ENCODE measurements at regions of chr9 and their contacts with region 1.

Region 1: GRCh38 chr9:93962561-93963440 is 7.6 kb upstream of the BARX1 start:
- DNase-seq: peak; percentile 85
- ATAC-seq: peak; percentile 56
- H3K4me3 ChIP-seq: no peak overlapping the region
- H3K4me3 Mint-ChIP-seq: no peak overlapping the region
- H3K27ac ChIP-seq: no peak overlapping the region
- H3K27ac Mint-ChIP-seq: no peak overlapping the region
- H3K4me1 ChIP-seq: peaks cover 40% of the 10 kb centered on the region in 2 donors
- H3K4me1 Mint-ChIP-seq: peaks cover 32% of the 10 kb centered on the region
- H3K27me3 ChIP-seq: peaks cover 0 to 72% (median 42%) of the 10 kb centered on the region in 4 experiments
- H3K27me3 Mint-ChIP-seq: peaks cover 54% of the 10 kb centered on the region
- CTCF ChIP-seq: peak; percentile 79

Region 2: GRCh38 chr9:92963831-92964626 is 998.8 kb before region 1 on chr9:
- CTCF ChIA-PET with region 1: no interaction called
- POLR2A ChIA-PET with region 1: no interaction called
- intact Hi-C with region 1: loop called (anchors 5 kb)
- DNase-seq: peak; percentile 88
- ATAC-seq: peak; percentile 80
- H3K4me3 ChIP-seq: peak overlapping the region; percentile 75 to 92 (median 86)
- H3K4me3 Mint-ChIP-seq: peak overlapping the region; percentile 96
- H3K27ac ChIP-seq: peak overlapping the region; percentile 78 to 83
- H3K27ac Mint-ChIP-seq: peak overlapping the region; percentile 98
- H3K4me1 ChIP-seq: peaks cover 58 to 74% of the 10 kb centered on the region in 2 donors
- H3K4me1 Mint-ChIP-seq: peaks cover 75% of the 10 kb centered on the region
- H3K27me3 ChIP-seq: no peaks in the 10 kb centered on the region
- H3K27me3 Mint-ChIP-seq: no peaks in the 10 kb centered on the region
- CTCF ChIP-seq: no peak

Region 3: DNA sequence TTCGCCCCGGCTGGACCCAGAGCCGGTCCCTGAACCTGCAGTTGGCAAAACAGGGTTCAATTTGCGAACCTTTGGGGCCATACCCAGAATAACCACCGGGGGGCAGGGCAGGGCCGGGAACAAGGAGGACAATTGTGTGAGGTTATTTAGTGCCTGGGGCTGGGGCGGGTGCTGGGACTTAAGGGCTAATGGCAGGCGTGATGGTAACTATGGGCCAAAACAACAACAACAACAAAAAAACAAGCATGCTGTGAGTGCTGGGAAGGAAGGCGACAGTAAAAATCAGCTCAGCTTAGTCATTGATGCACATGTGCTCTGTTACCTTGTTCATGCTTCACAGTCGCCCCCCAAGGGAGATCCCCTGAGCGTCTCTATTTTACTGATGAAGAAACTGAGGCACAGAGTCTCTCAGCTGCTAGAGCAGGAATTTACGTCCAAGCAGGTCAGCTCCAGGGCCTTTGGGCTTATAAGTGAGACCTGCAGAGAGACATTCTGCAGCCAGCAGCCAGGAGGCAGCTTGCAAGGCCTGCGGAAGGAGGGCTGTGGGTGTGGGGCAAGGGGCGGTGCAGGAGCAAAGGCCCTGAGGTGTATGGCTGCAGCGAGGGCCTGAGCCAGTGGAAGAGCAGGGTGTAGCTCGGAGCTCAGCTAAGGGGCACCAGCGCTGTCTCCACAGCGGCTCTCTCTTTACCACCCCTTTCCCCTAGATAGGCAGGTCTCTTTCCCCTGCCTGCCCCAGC is 280.4 kb before region 1 on chr9:
- CTCF ChIA-PET with region 1: interaction called, 60 read pairs
- POLR2A ChIA-PET with region 1: no interaction called
- intact Hi-C with region 1: no loop called
- DNase-seq: peak; percentile 59
- ATAC-seq: peak; percentile 41
- H3K4me3 ChIP-seq: no peak overlapping the region
- H3K4me3 Mint-ChIP-seq: no peak overlapping the region
- H3K27ac ChIP-seq: no peak overlapping the region
- H3K27ac Mint-ChIP-seq: no peak overlapping the region
- H3K4me1 ChIP-seq: no peaks in the 10 kb centered on the region
- H3K4me1 Mint-ChIP-seq: no peaks in the 10 kb centered on the region
- H3K27me3 ChIP-seq: peaks cover 0 to 8% (median 0%) of the 10 kb centered on the region in 4 experiments
- H3K27me3 Mint-ChIP-seq: peaks cover 16% of the 10 kb centered on the region
- CTCF ChIP-seq: peak; percentile 80

Region 4: DNA sequence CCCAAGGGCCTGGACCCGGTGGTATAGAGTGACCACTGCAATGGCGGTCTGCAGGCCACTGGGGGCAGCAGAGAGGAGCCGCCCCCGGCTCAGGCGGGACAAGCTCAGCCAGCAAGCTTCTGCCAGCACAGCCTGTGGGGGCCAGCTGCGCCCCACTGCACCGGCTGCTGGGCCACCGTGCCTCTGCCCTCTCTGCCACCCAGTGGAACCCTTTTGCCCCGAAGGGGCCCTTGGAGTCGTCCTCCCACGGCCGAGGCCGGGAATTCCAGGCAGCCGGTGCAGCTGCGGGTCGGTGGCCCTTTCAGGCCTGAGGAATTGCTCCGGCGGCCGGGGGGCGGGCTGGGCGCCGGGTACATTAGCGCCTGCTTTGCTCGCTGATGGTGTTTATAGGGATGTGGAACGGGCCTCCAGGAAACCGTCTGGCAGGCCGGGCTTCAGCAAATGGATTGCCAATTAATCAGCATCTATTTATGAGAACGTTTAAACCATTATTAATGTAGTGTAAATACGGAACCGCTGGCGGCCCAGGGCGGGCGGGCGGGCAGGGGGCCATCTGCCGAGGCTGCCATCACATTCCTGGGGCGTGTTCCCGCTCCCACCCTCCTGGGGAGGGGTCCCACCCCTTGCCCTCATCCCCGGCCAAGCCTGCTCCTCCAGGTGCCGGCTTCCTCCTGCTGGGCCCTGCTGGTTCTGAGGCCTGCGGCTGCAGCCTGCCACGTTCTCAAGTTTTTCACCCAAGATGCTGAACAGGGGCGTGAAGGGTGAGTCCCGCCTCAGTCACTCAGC is 135.1 kb before region 1 on chr9:
- CTCF ChIA-PET with region 1: interaction called, 4 read pairs
- POLR2A ChIA-PET with region 1: no interaction called
- intact Hi-C with region 1: loop called (anchors 2 kb)
- DNase-seq: peak; percentile 30
- ATAC-seq: no peak
- H3K4me3 ChIP-seq: no peak overlapping the region
- H3K4me3 Mint-ChIP-seq: no peak overlapping the region
- H3K27ac ChIP-seq: no peak overlapping the region
- H3K27ac Mint-ChIP-seq: no peak overlapping the region
- H3K4me1 ChIP-seq: peaks cover 0 to 12% of the 10 kb centered on the region in 2 donors
- H3K4me1 Mint-ChIP-seq: peaks cover 12% of the 10 kb centered on the region
- H3K27me3 ChIP-seq: peaks cover 0 to 31% (median 6%) of the 10 kb centered on the region in 4 experiments
- H3K27me3 Mint-ChIP-seq: peaks cover 47% of the 10 kb centered on the region
- CTCF ChIP-seq: peak; percentile 66

Region 5: DNA sequence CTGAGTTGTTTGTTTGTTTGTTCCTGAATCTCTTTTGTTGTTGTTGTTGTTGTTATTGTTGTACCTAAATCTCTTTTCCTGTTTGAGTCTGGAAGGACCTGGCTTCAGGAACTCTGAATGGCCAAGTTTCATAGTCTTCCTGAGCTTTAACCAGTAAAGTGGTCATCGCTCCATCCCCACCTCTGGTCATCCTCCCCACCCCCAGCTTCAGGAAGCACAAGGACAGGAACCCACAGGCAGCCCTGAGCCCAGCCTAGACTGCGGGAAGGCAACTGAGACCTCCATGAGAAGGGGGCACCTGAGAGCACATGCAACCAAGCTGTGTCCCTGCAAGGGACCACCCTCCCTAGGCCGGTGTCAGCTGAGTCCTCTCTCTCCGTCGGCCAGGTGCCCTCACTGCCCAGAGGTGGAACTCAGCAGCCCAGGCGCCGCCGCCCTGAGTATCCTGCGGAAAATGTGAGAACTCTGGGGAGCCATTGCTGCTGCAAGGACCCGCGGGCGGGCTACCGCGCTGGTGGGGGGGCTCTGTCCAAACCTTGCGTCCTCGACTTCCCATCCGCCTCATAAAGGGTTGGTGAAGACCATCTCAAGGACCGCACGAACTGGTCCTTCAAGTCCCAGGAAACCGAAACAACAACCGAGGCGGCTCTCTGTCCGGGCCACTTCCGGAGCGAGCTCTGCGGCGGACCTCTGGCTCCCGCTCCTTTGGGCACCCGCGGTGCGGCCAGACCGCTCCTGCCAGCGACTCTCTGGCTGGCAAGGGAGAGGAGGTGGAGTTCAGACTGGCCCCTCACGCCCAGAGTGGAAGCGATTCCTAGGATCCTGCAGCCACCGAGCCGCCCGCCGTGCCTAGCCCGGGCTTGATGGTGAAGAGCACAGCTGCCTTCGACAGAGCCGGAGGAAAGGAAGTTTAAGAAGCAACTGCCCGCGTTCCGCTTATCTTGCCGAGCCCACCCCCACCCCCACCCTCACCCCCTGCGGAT is 11.9 kb before region 1 on chr9:
- CTCF ChIA-PET with region 1: interaction called, 14 read pairs
- POLR2A ChIA-PET with region 1: no interaction called
- intact Hi-C with region 1: no loop called
- DNase-seq: peak; percentile 50
- ATAC-seq: no peak
- H3K4me3 ChIP-seq: peak overlapping the region; percentile 11 to 61 (median 45)
- H3K4me3 Mint-ChIP-seq: peak overlapping the region; percentile 76
- H3K27ac ChIP-seq: no peak overlapping the region
- H3K27ac Mint-ChIP-seq: no peak overlapping the region
- H3K4me1 ChIP-seq: peaks cover 62 to 76% of the 10 kb centered on the region in 2 donors
- H3K4me1 Mint-ChIP-seq: peaks cover 54% of the 10 kb centered on the region
- H3K27me3 ChIP-seq: peaks cover 0 to 92% (median 75%) of the 10 kb centered on the region in 4 experiments
- H3K27me3 Mint-ChIP-seq: peaks cover 65% of the 10 kb centered on the region
- CTCF ChIP-seq: no peak

Region 6: DNA sequence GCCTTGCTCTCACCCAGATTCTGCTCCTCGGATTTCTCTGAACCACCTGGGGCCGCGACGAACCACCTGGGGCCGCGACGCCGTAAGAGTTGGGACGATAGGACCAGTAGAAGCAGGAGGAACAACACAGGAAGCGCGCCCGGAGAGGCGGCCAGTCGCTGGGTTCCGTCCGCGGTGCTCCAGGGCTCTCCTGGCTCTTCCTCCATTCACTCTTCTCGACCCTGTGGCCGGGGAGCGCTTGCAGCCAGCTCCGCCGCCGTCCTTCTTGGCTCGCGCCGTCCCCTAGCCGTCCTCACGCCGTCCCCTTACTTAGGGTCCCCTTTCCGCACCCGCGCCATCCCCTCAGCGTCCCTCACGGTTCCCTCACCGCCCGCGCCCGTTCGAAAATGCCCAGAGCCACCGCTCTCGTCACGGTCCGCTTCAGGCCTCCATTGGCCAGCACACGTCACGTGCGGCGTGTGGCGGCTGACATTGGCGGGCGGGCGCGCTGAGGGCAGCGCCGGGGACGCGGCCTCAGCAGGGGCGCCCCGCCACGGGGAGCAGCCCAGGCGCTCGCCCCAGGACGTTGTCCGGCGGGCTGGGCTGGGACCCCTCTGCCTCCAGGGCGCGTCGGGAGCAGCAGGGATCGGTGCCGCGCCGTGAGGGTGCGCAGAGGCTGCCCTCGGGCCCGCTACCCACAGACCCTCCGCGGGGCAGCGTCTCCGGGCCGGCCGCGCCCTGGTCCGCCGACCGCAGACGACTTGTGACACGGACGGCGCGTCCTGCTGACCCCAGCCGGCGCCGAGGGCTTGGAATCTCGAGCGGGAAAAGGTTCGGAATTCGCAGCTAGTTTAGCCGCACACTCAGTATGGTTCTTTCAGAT is 67.7 kb after region 1 on chr9:
- CTCF ChIA-PET with region 1: no interaction called
- POLR2A ChIA-PET with region 1: no interaction called
- intact Hi-C with region 1: loop called (anchors 2 kb)
- DNase-seq: peak; percentile 85
- ATAC-seq: peak; percentile 99
- H3K4me3 ChIP-seq: peak overlapping the region; percentile 58 to 90 (median 77)
- H3K4me3 Mint-ChIP-seq: peak overlapping the region; percentile 100
- H3K27ac ChIP-seq: peak overlapping the region; percentile 36 to 79
- H3K27ac Mint-ChIP-seq: peak overlapping the region; percentile 97
- H3K4me1 ChIP-seq: peaks cover 12 to 13% of the 10 kb centered on the region in 2 donors
- H3K4me1 Mint-ChIP-seq: peaks cover 15% of the 10 kb centered on the region
- H3K27me3 ChIP-seq: peaks cover 0 to 6% (median 0%) of the 10 kb centered on the region in 4 experiments
- H3K27me3 Mint-ChIP-seq: peaks cover 5% of the 10 kb centered on the region
- CTCF ChIP-seq: no peak

Measured in B cell (primary cell).